AG04450 (cell line): ENCODE measurements at regions of chr2 and their contacts with region 1.

Region 1: GRCh38 chr2:210617732-210618330 is 61.4 kb downstream of the CPS1 start:
- DNase-seq: no peak
- H3K4me3 ChIP-seq: no peak overlapping the region
- H3K27ac ChIP-seq: no peak overlapping the region
- H3K27me3 ChIP-seq: no peaks in the 10 kb centered on the region
- CTCF ChIP-seq: peak; percentile 67

Region 2: DNA sequence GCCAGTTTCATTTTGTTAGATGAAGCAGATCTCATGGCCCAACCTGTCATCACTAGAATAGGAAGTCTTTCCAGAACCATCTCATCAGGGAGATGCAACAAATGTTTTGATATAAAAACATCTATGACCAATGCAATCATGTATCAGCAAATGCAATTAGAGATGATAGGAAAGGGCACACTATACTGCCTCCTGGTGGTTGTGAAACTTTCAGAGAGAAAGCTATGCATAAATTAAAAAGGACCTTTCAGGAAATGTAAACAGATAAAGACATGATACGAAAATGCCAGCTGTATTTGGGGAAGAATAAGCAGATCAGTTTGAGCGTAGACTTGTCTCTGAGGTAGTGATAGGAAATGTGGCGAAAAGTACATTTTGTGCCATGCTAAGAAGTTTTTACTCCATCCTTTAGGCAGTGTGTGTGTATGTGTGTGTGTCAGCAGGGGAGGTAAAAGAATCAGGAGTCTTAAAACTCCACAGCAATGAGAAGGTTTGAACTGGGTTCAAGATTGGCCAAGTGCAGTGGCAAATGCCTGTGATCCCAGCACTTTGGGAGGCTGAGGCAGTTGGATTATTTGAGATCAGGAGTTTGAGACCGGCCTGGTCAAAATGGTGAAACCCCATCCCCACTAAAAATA is 417.8 kb after region 1 on chr2:
- CTCF ChIA-PET with region 1: interaction called, 14 read pairs
- POLR2A ChIA-PET with region 1: no interaction called
- DNase-seq: no peak
- H3K4me3 ChIP-seq: no peak overlapping the region
- H3K27ac ChIP-seq: no peak overlapping the region
- H3K27me3 ChIP-seq: no peaks in the 10 kb centered on the region
- CTCF ChIP-seq: peak; percentile 52

Region 3: DNA sequence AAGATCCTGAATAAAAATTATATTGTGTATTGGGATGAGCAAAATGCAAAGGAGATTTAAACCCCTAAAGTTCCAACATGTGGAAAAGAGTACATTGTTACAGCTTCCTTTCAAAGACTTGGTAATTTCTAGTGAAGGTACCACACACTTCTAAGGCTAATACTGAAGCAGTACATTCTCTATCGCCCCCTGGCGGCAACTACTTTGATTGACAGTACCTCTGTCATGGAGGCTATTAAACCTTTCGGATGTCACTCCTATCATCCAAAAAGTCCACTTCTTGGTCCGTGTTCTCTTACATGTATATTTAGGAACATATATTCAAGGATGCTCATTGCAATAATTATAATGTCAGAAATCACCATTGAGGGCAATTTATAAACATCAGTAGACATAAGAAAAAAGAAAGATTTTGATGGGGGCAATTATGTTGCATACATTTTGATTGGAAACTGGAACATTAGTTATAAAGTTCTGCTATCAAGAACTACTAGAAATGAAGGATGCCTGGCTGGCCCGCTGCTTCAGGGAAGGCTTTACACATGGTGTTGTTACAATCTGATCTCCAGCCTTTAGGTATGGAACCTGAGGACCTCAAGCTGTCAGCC is 540.1 kb after region 1 on chr2:
- CTCF ChIA-PET with region 1: interaction called, 20 read pairs
- POLR2A ChIA-PET with region 1: no interaction called
- DNase-seq: no peak
- H3K4me3 ChIP-seq: no peak overlapping the region
- H3K27ac ChIP-seq: no peak overlapping the region
- H3K27me3 ChIP-seq: no peaks in the 10 kb centered on the region
- CTCF ChIP-seq: peak; percentile 68